ENCODE measurements at regions of chr9 and their contacts with region 1.

Region 1: DNA sequence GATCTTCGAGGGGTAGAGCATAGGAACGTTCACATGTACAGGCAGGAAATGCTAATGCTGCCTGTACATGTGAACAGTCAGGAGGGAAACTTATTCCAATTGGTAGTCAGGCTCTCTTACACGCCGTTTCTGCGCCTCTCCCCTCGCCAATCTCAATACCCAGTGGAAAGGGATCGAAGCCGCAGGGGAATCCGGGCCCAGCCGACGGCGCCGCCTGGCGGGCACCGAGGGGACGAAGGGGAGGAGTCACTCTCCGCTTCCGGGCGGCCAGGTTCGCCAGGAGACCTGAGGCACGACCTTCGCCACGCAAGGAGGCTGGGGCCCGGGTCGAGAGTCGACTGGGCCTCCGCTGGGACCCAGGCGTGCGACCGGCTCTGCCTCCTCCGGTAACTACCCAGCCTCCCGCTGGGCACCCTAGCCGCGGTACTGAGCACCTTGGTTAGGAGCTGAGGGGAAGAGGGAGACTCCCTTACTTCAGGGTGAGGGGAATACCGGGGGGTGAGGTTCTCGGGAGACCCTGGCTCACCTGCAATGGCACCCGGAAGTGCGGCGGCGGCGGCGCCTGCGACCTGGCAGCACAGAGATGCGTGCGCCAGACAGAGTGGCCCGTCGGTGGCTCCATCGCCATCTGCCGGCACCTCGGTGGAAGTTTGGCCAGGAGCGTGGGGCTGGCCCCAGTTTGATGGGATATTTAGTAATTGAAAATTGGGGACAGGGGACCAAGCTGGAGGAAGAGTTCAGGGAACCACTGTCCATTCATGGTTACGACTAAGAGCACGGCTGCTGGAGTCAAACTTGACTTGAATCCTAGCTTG is at the start of gene PIGO:
- DNase-seq: peak; percentile 74 to 96 (median 90)

Region 2: DNA sequence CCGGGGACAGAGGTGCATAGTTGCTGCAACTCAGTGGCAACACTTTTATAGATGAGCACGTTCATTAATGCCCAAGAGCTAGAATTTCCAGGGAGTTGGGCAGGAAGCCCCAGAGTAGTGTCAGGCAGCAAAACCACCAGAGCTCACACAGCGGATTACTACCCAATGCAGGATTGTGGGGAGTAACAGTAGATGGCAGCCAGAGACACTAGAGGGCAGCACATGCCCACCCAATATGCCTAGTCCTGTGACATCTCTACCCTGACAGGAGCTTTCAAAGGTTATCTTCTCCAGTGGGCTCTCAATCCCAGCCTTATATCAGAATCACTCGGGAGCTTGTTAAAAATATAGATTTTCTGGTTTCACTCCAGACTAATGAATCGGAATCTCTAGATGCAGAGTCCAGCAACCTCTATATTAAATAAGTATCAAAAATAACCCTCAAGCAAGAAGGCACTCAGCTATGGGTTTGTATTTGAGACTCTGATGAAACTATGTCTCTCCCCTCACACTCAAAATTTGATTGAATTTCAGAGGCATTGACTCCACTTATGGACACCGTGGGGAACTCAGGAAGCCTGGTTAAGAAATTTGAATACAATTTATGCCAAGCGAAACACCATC is 196.6 kb before region 1 on chr9:
- intact Hi-C with region 1: loop called (anchors 10 kb)
- DNase-seq: peak; percentile 49 to 95 (median 89)

Region 3: DNA sequence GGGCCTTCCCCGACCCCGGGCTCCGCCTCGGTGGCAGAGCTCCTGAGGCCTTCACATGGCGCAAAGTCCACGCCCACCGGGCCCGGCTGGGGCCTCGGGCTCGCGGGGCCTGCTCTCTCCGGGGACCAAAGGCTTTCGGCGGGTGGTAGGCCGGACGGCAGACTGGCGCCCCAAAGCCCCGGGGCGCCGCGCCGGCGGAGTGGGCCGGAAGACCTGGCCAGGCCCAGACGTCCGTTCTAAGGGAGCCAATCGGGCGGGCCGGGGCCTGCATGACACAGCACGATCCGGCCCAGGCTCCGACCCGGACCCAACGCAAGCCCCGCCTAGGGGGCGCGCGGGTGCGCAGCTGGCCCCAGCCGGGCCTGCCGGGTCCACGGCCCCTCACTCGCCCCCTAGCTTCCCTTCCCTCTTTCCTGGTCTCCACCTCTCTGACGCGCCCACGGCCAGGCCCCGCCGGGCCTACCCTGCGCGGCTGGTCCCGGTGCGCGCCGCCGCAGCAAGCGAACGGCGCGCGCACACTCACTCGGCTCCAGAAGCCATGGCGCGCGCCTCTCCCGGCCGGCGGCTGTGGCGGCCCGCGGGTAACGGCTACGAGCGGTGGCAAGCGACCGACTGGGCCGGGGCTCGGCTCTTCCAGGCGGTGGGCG is 24.3 kb before region 1 on chr9:
- intact Hi-C with region 1: loop called (anchors 2 kb)
- DNase-seq: peak; percentile 48 to 87 (median 74)

Region 4: GRCh38 chr9:35179347-35180287 is 83.4 kb after region 1 on chr9:
- intact Hi-C with region 1: no loop called
- DNase-seq: no peak